Activated CD4-positive, alpha-beta memory T cell treated with anti-CD3 and anti-CD28 coated beads for 36 hours (primary cell): ENCODE measurements at regions of chr13 and their contacts with region 1.

Region 1: GRCh38 chr13:45047394-45048310 is 58.3 kb downstream of the GPALPP1 start:
- DNase-seq: peak; percentile 88
- H3K4me3 Mint-ChIP-seq: peak overlapping the region; percentile 70
- H3K27ac Mint-ChIP-seq: no peak overlapping the region
- H3K4me1 Mint-ChIP-seq: peaks cover 15% of the 10 kb centered on the region
- H3K27me3 Mint-ChIP-seq: peaks cover 36% of the 10 kb centered on the region

Region 2: GRCh38 chr13:44938854-44939253 is 108.8 kb before region 1 on chr13:
- CTCF ChIA-PET with region 1: no interaction called
- POLR2A ChIA-PET with region 1: no interaction called
- intact Hi-C with region 1: no loop called
- DNase-seq: no peak
- H3K4me3 Mint-ChIP-seq: no peak overlapping the region
- H3K27ac Mint-ChIP-seq: no peak overlapping the region
- H3K4me1 Mint-ChIP-seq: peaks cover 4% of the 10 kb centered on the region
- H3K27me3 Mint-ChIP-seq: no peaks in the 10 kb centered on the region

Region 3: DNA sequence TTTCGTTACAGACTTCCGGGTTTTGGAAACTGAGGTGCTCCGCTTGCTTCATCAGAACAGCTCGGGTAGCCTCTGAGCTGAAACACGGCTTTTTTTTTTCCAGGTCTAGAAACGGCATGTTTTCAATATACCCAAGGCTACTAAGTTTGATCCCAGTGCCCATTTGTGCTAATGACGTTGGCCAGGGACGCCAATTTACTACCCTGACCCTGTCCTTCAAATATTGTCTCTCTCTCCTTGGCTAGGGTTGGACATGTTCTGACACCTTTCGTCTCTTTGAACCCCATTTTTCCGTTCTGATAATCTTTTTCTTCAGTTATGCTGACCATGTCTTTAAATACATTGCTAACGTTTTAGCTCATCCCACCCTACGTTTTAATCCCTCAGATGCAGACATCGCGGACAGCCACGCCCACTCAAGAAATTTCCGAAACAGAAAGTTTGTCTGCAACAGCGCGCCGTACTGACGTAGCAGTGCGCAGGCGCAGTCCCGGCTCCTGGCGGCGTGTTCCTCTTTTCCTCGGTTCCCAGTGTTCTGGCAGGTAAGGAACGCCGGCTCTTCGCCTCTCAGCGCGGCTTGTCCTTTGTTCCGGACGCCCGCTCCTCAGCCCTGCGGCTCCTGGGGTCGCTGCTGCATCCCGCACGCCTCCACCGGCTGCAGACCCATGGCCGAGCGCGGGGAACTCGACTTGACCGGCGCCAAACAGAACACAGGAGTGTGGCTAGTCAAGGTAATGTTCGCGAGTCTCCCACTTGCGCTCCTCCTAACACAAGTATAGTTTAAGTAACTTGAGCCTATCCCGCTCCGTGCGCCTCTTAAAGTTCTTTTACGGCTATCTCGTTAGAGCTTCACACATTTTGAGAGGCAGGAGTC is 72.6 kb after region 1 on chr13 and contains the start of gene GTF2F2:
- CTCF ChIA-PET with region 1: interaction called, 9 read pairs
- POLR2A ChIA-PET with region 1: no interaction called
- intact Hi-C with region 1: loop called (anchors 2 kb)
- DNase-seq: peak; percentile 91
- H3K4me3 Mint-ChIP-seq: no peak within 1 kb of the TSS
- H3K27ac Mint-ChIP-seq: no peak within 1 kb of the TSS
- H3K4me1 Mint-ChIP-seq: peaks cover 8% of the 10 kb centered on the region
- H3K27me3 Mint-ChIP-seq: no peaks in the 10 kb centered on the region
- total RNA-seq, gene GTF2F2: 25.4 to 26.0 TPM

Region 4: GRCh38 chr13:45297456-45298205 is 250.0 kb after region 1 on chr13:
- CTCF ChIA-PET with region 1: interaction called, 38 read pairs
- POLR2A ChIA-PET with region 1: no interaction called
- intact Hi-C with region 1: loop called (anchors 1 kb)
- DNase-seq: peak; percentile 45
- H3K4me3 Mint-ChIP-seq: no peak overlapping the region
- H3K27ac Mint-ChIP-seq: peak overlapping the region; percentile 46
- H3K4me1 Mint-ChIP-seq: peaks cover 37% of the 10 kb centered on the region
- H3K27me3 Mint-ChIP-seq: peaks cover 5% of the 10 kb centered on the region

Region 5: GRCh38 chr13:45316338-45316737 is 268.7 kb after region 1 on chr13:
- CTCF ChIA-PET with region 1: interaction called, 11 read pairs
- POLR2A ChIA-PET with region 1: no interaction called
- intact Hi-C with region 1: no loop called
- DNase-seq: no peak
- H3K4me3 Mint-ChIP-seq: no peak overlapping the region
- H3K27ac Mint-ChIP-seq: no peak overlapping the region
- H3K4me1 Mint-ChIP-seq: peaks cover 9% of the 10 kb centered on the region
- H3K27me3 Mint-ChIP-seq: peaks cover 2% of the 10 kb centered on the region

Region 6: DNA sequence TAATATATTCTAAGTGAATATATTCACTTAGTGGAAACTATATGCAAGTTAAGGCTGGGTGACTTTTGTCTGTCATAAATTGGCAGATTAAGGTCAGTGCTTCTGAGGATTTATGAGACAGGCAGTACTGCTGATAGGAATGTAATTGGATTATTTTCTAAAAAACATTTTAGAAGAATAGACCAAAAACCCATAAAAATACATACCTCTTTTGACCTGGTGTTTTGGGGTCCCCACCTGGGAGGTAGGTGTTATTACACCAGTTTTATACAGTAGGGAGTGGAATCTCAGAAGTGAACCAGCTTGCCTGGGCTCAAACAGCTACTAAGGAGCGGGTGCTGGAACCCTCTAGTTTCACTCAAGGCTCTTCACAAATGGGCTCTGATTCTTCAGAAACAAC is 442.4 kb after region 1 on chr13:
- CTCF ChIA-PET with region 1: interaction called, 3 read pairs
- POLR2A ChIA-PET with region 1: no interaction called
- intact Hi-C with region 1: loop called (anchors 2 kb)
- DNase-seq: no peak
- H3K4me3 Mint-ChIP-seq: no peak overlapping the region
- H3K27ac Mint-ChIP-seq: no peak overlapping the region
- H3K4me1 Mint-ChIP-seq: peaks cover 2% of the 10 kb centered on the region
- H3K27me3 Mint-ChIP-seq: no peaks in the 10 kb centered on the region

Region 7: DNA sequence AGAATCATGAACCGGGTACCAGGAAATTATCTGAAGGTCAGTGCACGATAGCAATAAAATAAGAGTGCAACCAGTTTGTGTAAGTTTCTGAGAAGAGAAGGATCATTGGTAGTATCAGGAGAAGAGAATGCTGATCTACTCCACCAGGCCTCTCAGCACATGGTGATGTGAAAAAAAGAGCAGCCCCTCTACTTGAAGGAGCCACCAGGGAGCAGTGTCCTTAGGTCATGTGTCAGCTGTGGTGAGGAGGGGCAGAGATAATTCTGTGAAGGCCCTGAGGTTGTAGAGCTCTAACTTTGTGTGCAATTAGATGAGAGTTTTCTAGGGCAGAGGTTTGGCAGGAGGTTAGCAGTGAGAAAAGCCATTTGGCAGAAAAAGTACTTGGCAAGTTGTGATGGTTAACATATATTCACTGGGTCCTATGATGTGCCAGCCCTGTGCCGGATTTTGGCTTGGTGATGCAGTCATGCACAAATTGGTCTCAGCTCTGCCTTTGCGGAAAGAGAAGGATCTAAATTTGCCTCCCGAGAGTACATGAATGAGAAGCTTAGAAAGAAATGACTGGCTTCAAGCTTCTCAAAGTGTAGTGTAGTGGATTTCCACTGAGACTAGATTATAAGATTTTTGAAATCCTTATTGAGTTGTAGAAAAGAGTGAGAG is 1024.1 kb after region 1 on chr13:
- CTCF ChIA-PET with region 1: no interaction called
- POLR2A ChIA-PET with region 1: no interaction called
- intact Hi-C with region 1: no loop called
- DNase-seq: no peak
- H3K4me3 Mint-ChIP-seq: no peak overlapping the region
- H3K27ac Mint-ChIP-seq: no peak overlapping the region
- H3K4me1 Mint-ChIP-seq: no peaks in the 10 kb centered on the region
- H3K27me3 Mint-ChIP-seq: peaks cover 5% of the 10 kb centered on the region